Activated CD8-positive, alpha-beta memory T cell treated with anti-CD3 and anti-CD28 coated beads, Interleukin-2, amount 10 ng/mL, durations not matched to agents 7 days and 5 days (primary cell): ENCODE measurements at regions of chr17 and their contacts with region 1.

Region 1: DNA sequence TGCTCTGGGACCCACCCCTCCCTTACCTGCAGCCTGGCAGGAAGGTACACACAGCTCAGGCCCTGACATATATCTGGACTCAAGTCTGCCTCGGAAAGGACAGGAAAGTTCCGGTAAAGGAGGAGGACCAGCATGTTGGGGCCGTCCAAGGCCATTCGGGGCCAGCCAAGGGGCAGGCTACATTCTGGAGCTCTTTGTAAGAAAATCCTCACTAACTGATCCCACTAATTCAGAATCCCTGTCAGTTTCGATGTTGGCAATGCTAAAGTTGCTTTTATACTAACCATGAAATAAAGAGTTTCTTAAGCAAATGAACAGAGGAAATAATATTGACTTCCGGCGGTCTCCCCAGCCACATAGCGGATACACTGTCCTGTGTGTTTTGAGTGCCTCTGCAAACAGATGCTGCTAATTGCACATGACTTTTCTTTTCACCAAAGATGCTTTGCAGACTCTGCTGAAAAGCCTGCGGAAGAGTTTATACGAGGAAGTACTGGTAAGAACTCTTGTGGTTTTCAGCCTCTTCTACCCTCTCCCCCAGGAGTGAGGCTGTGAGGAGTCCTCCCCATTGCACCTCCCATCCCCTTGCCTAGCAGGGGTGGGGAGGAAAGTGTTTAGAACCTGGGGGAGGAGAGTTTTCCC is 54.8 kb downstream of the PLXDC1 start:
- DNase-seq: peak; percentile 87
- ATAC-seq: peak; percentile 57
- H3K4me3 Mint-ChIP-seq: peak overlapping the region; percentile 64
- H3K27ac Mint-ChIP-seq: peak overlapping the region; percentile 92
- H3K4me1 Mint-ChIP-seq: peaks cover 57% of the 10 kb centered on the region
- H3K27me3 Mint-ChIP-seq: peaks cover 6% of the 10 kb centered on the region

Region 2: GRCh38 chr17:39057701-39058206 is 38.9 kb before region 1 on chr17:
- CTCF ChIA-PET with region 1: interaction called, 11 read pairs
- DNase-seq: no peak
- ATAC-seq: no peak
- H3K4me3 Mint-ChIP-seq: peak overlapping the region; percentile 74
- H3K27ac Mint-ChIP-seq: peak overlapping the region; percentile 82
- H3K4me1 Mint-ChIP-seq: peaks cover 19% of the 10 kb centered on the region
- H3K27me3 Mint-ChIP-seq: peaks cover 13% of the 10 kb centered on the region

Region 3: DNA sequence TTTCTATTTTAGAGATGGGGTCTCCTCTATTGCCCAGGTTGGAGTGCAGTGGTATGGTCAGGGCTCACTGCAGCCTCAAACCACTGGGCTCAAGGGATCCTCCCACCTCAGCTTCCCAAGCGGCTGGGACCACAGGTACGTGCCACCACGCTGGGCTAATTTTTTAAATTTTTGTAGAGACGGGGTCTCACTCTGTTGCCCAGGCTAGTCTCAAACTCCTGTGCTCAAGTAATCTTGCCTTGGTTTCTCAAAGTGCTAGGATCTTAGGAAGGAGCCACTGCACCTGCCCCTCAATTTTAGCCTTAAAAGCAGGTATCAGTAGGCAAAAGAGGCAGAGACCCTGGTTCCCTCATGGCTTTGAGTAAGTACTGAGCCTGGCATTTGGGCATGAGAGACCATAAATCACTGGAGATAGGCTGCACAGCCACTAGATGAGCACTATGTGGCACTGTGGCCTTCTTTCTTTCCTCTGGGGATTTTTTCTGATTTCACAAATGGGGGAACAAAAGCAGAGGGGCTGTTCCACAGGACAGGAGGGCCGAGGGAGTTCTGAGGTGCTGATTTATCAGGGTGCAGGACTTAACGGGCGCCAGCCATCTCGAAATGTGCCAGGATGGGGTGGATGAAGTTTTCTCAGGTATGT is 27.4 kb before region 1 on chr17:
- CTCF ChIA-PET with region 1: interaction called, 11 read pairs
- DNase-seq: peak; percentile 49
- ATAC-seq: peak; percentile 88
- H3K4me3 Mint-ChIP-seq: no peak overlapping the region
- H3K27ac Mint-ChIP-seq: no peak overlapping the region
- H3K4me1 Mint-ChIP-seq: peaks cover 19% of the 10 kb centered on the region
- H3K27me3 Mint-ChIP-seq: no peaks in the 10 kb centered on the region

Region 4: GRCh38 chr17:39132192-39132610 is 35.6 kb after region 1 on chr17:
- CTCF ChIA-PET with region 1: no interaction called
- DNase-seq: no peak
- ATAC-seq: no peak
- H3K4me3 Mint-ChIP-seq: no peak overlapping the region
- H3K27ac Mint-ChIP-seq: no peak overlapping the region
- H3K4me1 Mint-ChIP-seq: no peaks in the 10 kb centered on the region
- H3K27me3 Mint-ChIP-seq: no peaks in the 10 kb centered on the region